Spleen (tissue), 13 donors: ENCODE measurements at regions of chr22 and their contacts with region 1.

Region 1: GRCh38 chr22:41857155-41857859 is 24.4 kb downstream of the SREBF2 start:
- DNase-seq: no peak
- H3K4me3 ChIP-seq: no peak overlapping the region
- H3K27ac ChIP-seq: peak overlapping the region in 6 of 8 donors; percentile 2 to 91 (median 33)
- H3K4me1 ChIP-seq: peaks cover 25 to 90% (median 56%) of the 10 kb centered on the region in 6 donors
- H3K27me3 ChIP-seq: no peaks in the 10 kb centered on the region
- CTCF ChIP-seq: peak; percentile 45 to 73 (median 63)
- POLR2A ChIP-seq: no peak

Region 2: DNA sequence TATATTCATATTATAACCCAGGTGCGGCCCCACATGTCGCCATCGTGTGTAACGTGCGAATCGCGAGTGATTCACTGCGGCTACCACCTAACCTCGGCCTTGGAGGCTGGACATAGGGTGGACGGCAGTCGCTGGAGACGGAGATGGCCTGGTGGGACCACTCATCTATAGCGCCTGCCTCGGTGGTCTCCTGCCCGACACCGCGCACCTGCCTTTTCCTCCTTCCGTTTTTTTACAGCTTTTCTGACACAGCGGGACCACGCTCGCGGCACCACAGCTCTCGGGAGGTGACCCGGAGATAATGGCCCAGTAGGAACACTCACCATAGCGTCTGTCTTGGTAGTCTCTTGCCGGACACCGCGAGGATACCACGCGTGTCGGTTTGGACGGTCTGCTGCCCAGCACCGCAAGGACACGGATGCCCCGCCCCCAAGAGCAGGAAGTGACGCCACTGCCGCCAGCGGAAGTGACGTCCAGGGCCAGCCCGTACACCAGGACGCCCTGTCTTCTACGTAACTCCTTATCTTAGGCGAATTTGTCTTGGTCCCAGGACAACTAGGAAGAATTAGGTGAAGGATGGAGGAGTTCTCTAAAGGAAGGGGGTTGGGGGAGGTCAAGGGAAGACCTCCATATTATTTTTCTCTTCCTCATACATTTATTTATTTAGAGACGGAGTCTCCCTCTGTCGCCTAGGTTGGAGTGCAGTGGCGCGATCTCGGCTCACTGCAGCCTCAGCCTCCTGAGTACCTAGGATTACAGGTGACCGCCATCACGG is 175.1 kb before region 1 on chr22:
- intact Hi-C with region 1: no loop called
- DNase-seq: peak; percentile 95
- H3K4me3 ChIP-seq: peak overlapping the region; percentile 40 to 85 (median 61)
- H3K27ac ChIP-seq: peak overlapping the region; percentile 65 to 94 (median 90)
- H3K4me1 ChIP-seq: peaks cover 7 to 76% (median 35%) of the 10 kb centered on the region in 6 donors
- H3K27me3 ChIP-seq: no peaks in the 10 kb centered on the region
- CTCF ChIP-seq: no peak
- POLR2A ChIP-seq: peak in 1 of 3 donors; percentile 56

Region 3: GRCh38 chr22:41697126-41697775 is 160.1 kb before region 1 on chr22:
- intact Hi-C with region 1: loop called (anchors 2 kb)
- DNase-seq: peak; percentile 97
- H3K4me3 ChIP-seq: peak overlapping the region in 4 of 8 donors; percentile 9 to 46 (median 16)
- H3K27ac ChIP-seq: peak overlapping the region in 7 of 8 donors; percentile 40 to 74 (median 57)
- H3K4me1 ChIP-seq: peaks cover 15 to 28% (median 22%) of the 10 kb centered on the region in 6 donors
- H3K27me3 ChIP-seq: no peaks in the 10 kb centered on the region
- CTCF ChIP-seq: peak; percentile 89 to 99 (median 97)
- POLR2A ChIP-seq: no peak